Caco-2 (cell line): ENCODE measurements at regions of chr3 and their contacts with region 1.

Region 1: DNA sequence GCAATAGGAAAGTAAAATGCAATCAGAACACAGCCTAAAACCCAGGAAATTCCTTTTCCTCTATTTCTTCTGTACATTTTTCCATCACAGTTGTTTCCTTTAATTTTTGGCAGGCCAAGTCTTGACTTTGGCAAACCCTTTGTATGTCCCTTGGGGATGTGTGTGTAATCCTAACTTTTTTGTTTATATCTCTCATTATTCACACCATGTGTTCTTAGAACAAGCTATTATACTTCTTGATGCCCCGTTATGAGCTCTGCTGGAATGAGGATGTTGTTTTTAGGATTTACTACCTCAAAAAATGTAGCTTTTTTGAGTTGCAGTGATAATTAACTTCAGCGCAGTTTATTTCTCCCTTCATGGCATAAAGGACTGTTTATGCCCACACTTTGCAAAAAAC is 123.4 kb downstream of the ABI3BP start:
- DNase-seq: no peak
- H3K4me3 ChIP-seq: no peak overlapping the region
- H3K4me3 Mint-ChIP-seq: no peak overlapping the region
- H3K27ac Mint-ChIP-seq: no peak overlapping the region
- H3K4me1 ChIP-seq: no peaks in the 10 kb centered on the region
- H3K4me1 Mint-ChIP-seq: no peaks in the 10 kb centered on the region
- H3K27me3 ChIP-seq: no peaks in the 10 kb centered on the region
- H3K27me3 Mint-ChIP-seq: peaks cover 8% of the 10 kb centered on the region
- CTCF ChIP-seq: no peak

Region 2: GRCh38 chr3:99674086-99674789 is 1195.5 kb before region 1 on chr3:
- CTCF ChIA-PET with region 1: no interaction called
- POLR2A ChIA-PET with region 1: interaction called, 19 read pairs
- intact Hi-C with region 1: no loop called
- DNase-seq: no peak
- H3K4me3 ChIP-seq: no peak overlapping the region
- H3K4me3 Mint-ChIP-seq: no peak overlapping the region
- H3K27ac Mint-ChIP-seq: no peak overlapping the region
- H3K4me1 ChIP-seq: no peaks in the 10 kb centered on the region
- H3K4me1 Mint-ChIP-seq: no peaks in the 10 kb centered on the region
- H3K27me3 ChIP-seq: no peaks in the 10 kb centered on the region
- H3K27me3 Mint-ChIP-seq: no peaks in the 10 kb centered on the region
- CTCF ChIP-seq: no peak

Region 3: DNA sequence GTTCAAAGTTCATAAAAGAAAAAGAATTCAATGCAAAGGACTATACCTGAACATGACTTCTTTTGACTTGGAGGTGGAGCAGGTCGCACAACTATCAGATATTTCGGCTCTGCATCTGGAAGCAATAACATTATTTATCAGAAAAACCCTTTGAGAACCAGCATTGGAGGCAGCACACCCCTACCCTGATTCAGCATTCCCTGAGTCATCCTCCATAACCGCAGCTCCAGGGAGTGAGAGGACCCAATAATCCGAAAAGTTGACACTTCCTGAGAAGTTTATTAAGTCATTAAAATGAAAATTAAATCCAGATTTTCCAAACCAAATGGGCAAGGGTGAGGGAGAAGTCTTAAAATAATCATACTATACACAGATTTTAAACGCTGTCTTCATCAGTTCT is 32.8 kb after region 1 on chr3:
- CTCF ChIA-PET with region 1: no interaction called
- POLR2A ChIA-PET with region 1: no interaction called
- intact Hi-C with region 1: loop called (anchors 1 kb)
- DNase-seq: no peak
- H3K4me3 ChIP-seq: no peak overlapping the region
- H3K4me3 Mint-ChIP-seq: no peak overlapping the region
- H3K27ac Mint-ChIP-seq: no peak overlapping the region
- H3K4me1 ChIP-seq: no peaks in the 10 kb centered on the region
- H3K4me1 Mint-ChIP-seq: no peaks in the 10 kb centered on the region
- H3K27me3 ChIP-seq: no peaks in the 10 kb centered on the region
- H3K27me3 Mint-ChIP-seq: no peaks in the 10 kb centered on the region
- CTCF ChIP-seq: no peak

Region 4: GRCh38 chr3:100915706-100916495 is 46.1 kb after region 1 on chr3:
- CTCF ChIA-PET with region 1: no interaction called
- POLR2A ChIA-PET with region 1: no interaction called
- intact Hi-C with region 1: no loop called
- DNase-seq: no peak
- H3K4me3 ChIP-seq: no peak overlapping the region
- H3K4me3 Mint-ChIP-seq: no peak overlapping the region
- H3K27ac Mint-ChIP-seq: no peak overlapping the region
- H3K4me1 ChIP-seq: no peaks in the 10 kb centered on the region
- H3K4me1 Mint-ChIP-seq: no peaks in the 10 kb centered on the region
- H3K27me3 ChIP-seq: no peaks in the 10 kb centered on the region
- H3K27me3 Mint-ChIP-seq: peaks cover 9% of the 10 kb centered on the region
- CTCF ChIP-seq: no peak

Region 5: DNA sequence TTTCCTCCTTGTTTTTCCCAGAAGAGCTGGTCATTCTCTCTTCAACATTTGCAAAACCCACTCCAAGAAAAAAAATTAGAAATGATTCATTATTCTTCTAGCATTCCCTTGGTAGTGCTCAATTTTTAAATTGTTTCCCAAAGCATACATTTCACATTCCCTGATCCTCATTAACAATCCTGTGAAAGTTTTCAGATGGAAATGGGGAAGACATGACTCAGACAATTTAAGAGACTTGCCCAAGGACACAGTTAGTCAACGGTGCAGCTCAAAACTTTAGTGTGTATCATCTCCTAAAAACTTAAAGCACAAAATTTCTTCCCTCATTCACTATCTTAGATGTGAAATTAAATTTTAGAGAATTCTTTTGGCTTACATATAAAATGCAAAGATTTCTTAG is 140.5 kb after region 1 on chr3:
- CTCF ChIA-PET with region 1: no interaction called
- POLR2A ChIA-PET with region 1: no interaction called
- intact Hi-C with region 1: no loop called
- DNase-seq: no peak
- H3K4me3 ChIP-seq: no peak overlapping the region
- H3K4me3 Mint-ChIP-seq: no peak overlapping the region
- H3K27ac Mint-ChIP-seq: no peak overlapping the region
- H3K4me1 ChIP-seq: no peaks in the 10 kb centered on the region
- H3K4me1 Mint-ChIP-seq: no peaks in the 10 kb centered on the region
- H3K27me3 ChIP-seq: no peaks in the 10 kb centered on the region
- H3K27me3 Mint-ChIP-seq: peaks cover 6% of the 10 kb centered on the region
- CTCF ChIP-seq: no peak